ENCODE measurements at regions of chr5 and their contacts with region 1.

Region 1: DNA sequence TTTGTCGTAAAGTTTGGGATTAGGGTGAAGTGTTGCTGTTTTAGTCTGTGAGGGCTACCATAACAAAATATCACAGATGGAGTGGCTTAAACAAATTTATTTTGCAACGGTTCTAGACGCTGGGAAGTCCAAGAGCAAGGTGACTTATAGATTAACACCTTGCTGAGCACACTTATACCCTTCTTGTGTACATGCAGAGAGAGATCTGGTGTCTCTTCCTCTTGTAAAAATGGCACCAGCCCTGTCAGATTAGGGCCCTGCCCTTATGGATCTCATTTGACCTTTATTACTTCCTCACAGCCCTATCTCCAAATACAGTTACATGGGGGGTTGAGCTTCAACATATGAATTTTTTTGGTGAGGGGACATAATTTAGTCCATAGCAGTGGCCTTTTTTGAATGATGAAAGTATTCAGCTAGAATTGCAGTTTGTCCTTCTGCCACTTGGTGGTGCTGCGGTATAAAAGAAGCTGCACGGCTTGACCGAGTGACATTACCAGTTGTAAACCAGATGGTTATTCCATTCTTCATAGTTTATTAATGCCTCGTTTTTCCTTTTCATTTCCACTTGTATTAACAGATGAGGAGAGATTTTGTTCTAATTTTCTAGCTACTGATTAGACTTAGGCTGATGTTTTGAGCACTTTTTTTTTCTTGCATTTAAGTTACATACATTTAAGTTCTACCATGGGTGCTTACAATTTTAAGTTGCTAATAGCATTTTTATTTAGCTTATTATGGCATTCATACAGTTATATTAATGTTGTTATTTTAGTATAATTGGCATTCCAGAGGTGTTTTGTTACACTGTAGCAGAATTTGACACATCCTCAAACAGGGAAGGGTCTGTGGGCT is 19.4 kb downstream of the DCP2 start:
- DNase-seq: no peak
- ATAC-seq: peak; percentile 95
- H3K4me3 ChIP-seq: no peak overlapping the region
- H3K27ac ChIP-seq: no peak overlapping the region
- H3K4me1 ChIP-seq: no peaks in the 10 kb centered on the region
- H3K27me3 ChIP-seq: no peaks in the 10 kb centered on the region
- CTCF ChIP-seq: peak; percentile 79 to 93 (median 90)
- EP300 ChIP-seq: no peak
- POLR2A ChIP-seq: no peak
- RAD21 ChIP-seq: peak; percentile 88

Region 2: GRCh38 chr5:112958093-112959088 is 37.6 kb before region 1 on chr5:
- CTCF ChIA-PET with region 1: interaction called, 7 read pairs
- POLR2A ChIA-PET with region 1: no interaction called
- RAD21 ChIA-PET with region 1: interaction called, 6 read pairs
- SMC1A ChIA-PET with region 1: interaction called, 11 read pairs
- in situ Hi-C with region 1: no loop called
- intact Hi-C with region 1: no loop called
- DNase-seq: peak; percentile 57
- ATAC-seq: peak; percentile 83
- H3K4me3 ChIP-seq: 0 out of 2 replicates have a peak overlapping the region, but pooled peaks have one; percentile 25
- H3K27ac ChIP-seq: no peak overlapping the region; the same call in 1 of the 2 replicates
- H3K4me1 ChIP-seq: peaks cover 29% of the 10 kb centered on the region
- H3K27me3 ChIP-seq: no peaks in the 10 kb centered on the region
- CTCF ChIP-seq: no peak
- EP300 ChIP-seq: no peak
- POLR2A ChIP-seq: no peak
- RAD21 ChIP-seq: no peak

Region 3: GRCh38 chr5:112976432-112977309 is 19.3 kb before region 1 on chr5 and contains the start of gene DCP2:
- CTCF ChIA-PET with region 1: interaction called, 62 read pairs
- POLR2A ChIA-PET with region 1: no interaction called
- RAD21 ChIA-PET with region 1: interaction called, 19 read pairs
- SMC1A ChIA-PET with region 1: interaction called, 26 read pairs
- in situ Hi-C with region 1: no loop called
- intact Hi-C with region 1: no loop called
- DNase-seq: peak; percentile 99
- ATAC-seq: peak; percentile 97
- H3K4me3 ChIP-seq: peak within 1 kb of the TSS; percentile 97
- H3K27ac ChIP-seq: peak within 1 kb of the TSS; percentile 88
- H3K4me1 ChIP-seq: no peaks in the 10 kb centered on the region; the same call in 1 of the 2 replicates
- H3K27me3 ChIP-seq: no peaks in the 10 kb centered on the region
- CTCF ChIP-seq: no peak
- EP300 ChIP-seq: no peak
- POLR2A ChIP-seq: peak; percentile 97
- RAD21 ChIP-seq: no peak
- polyA plus RNA-seq, gene DCP2: 23.4 to 25.3 TPM

Region 4: DNA sequence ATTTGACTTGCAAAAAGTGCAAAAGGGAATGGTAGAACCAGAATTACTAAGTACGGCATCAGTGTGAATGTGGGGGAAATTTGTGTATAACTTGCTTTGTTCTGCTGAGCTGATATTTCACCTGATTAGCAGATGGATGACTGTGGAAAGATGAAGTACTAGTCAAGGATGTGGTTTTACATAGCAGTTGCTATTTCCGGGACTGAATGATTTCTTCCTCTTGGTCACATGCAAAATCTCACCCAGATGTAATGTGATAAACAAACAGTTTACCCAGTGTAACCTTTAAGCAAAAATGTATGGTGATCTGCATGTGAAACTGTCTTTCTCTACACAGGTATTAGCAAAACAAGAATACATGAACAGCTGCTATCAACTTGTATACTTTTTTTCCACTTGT is 26.7 kb after region 1 on chr5:
- CTCF ChIA-PET with region 1: interaction called, 17 read pairs
- POLR2A ChIA-PET with region 1: interaction called, 3 read pairs
- RAD21 ChIA-PET with region 1: interaction called, 4 read pairs
- SMC1A ChIA-PET with region 1: interaction called, 15 read pairs
- in situ Hi-C with region 1: no loop called
- intact Hi-C with region 1: no loop called
- DNase-seq: peak; percentile 11
- ATAC-seq: peak; percentile 53
- H3K4me3 ChIP-seq: no peak overlapping the region
- H3K27ac ChIP-seq: no peak overlapping the region
- H3K4me1 ChIP-seq: no peaks in the 10 kb centered on the region
- H3K27me3 ChIP-seq: no peaks in the 10 kb centered on the region
- CTCF ChIP-seq: no peak
- EP300 ChIP-seq: no peak
- POLR2A ChIP-seq: no peak
- RAD21 ChIP-seq: no peak

Region 5: GRCh38 chr5:113295111-113295539 is 299.1 kb after region 1 on chr5:
- CTCF ChIA-PET with region 1: no interaction called
- POLR2A ChIA-PET with region 1: no interaction called
- RAD21 ChIA-PET with region 1: no interaction called
- SMC1A ChIA-PET with region 1: no interaction called
- in situ Hi-C with region 1: no loop called
- intact Hi-C with region 1: no loop called
- DNase-seq: no peak
- ATAC-seq: no peak
- H3K4me3 ChIP-seq: peak overlapping the region; percentile 65
- H3K27ac ChIP-seq: no peak overlapping the region
- H3K4me1 ChIP-seq: 0 out of 2 replicates have a peak, but pooled peaks cover 5% of the 10 kb centered on the region
- H3K27me3 ChIP-seq: peaks cover 7 to 13% of the 10 kb centered on the region in 2 experiments
- CTCF ChIP-seq: no peak
- EP300 ChIP-seq: no peak
- POLR2A ChIP-seq: no peak
- RAD21 ChIP-seq: no peak

Region 6: GRCh38 chr5:113378959-113379541 is 383.1 kb after region 1 on chr5:
- CTCF ChIA-PET with region 1: interaction called, 21 read pairs
- POLR2A ChIA-PET with region 1: no interaction called
- RAD21 ChIA-PET with region 1: interaction called, 3 read pairs
- SMC1A ChIA-PET with region 1: interaction called, 4 read pairs
- in situ Hi-C with region 1: no loop called
- intact Hi-C with region 1: loop called (anchors 5 kb)
- DNase-seq: peak; percentile 9
- ATAC-seq: peak; percentile 84
- H3K4me3 ChIP-seq: no peak overlapping the region
- H3K27ac ChIP-seq: no peak overlapping the region
- H3K4me1 ChIP-seq: no peaks in the 10 kb centered on the region
- H3K27me3 ChIP-seq: no peaks in the 10 kb centered on the region
- CTCF ChIP-seq: peak; percentile 67 to 80 (median 77)
- EP300 ChIP-seq: no peak
- POLR2A ChIP-seq: no peak
- RAD21 ChIP-seq: peak; percentile 76

Region 7: DNA sequence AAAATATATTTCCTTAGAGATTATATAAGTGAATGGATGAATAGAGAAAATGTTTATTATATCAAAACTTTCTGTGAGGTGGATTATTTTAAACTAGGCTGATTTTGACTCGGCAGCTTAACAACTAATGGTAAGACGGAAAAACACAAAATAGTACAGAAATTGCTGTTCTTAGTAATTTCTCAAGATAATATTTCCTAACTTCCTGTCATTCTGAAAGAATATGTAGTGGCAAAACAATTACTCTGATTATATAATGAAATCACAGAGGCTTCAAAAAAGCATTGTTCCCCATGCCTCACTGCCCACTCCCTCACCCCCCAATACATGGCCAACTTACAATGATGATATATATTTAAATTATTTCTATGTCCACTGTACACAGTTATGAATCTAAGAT is 602.9 kb after region 1 on chr5:
- CTCF ChIA-PET with region 1: interaction called, 12 read pairs
- POLR2A ChIA-PET with region 1: no interaction called
- RAD21 ChIA-PET with region 1: interaction called, 7 read pairs
- SMC1A ChIA-PET with region 1: interaction called, 8 read pairs
- in situ Hi-C with region 1: no loop called
- intact Hi-C with region 1: no loop called
- DNase-seq: no peak
- ATAC-seq: no peak
- H3K4me3 ChIP-seq: no peak overlapping the region
- H3K27ac ChIP-seq: no peak overlapping the region
- H3K4me1 ChIP-seq: no peaks in the 10 kb centered on the region
- H3K27me3 ChIP-seq: no peaks in the 10 kb centered on the region
- CTCF ChIP-seq: no peak
- EP300 ChIP-seq: no peak
- POLR2A ChIP-seq: no peak
- RAD21 ChIP-seq: no peak

Measured in GM12878 (cell line).